Activated CD4-positive, alpha-beta memory T cell treated with anti-CD3 and anti-CD28 coated beads, Interleukin-2, amount 10 ng/mL, durations not matched to agents 7 days and 5 days (primary cell): ENCODE measurements at regions of chr1 and their contacts with region 1.

Region 1: GRCh38 chr1:9004700-9005394 is 21.4 kb downstream of the SLC2A7 start:
- DNase-seq: peak; percentile 87
- H3K4me3 Mint-ChIP-seq: no peak overlapping the region
- H3K27ac Mint-ChIP-seq: no peak overlapping the region
- H3K4me1 Mint-ChIP-seq: peaks cover 10% of the 10 kb centered on the region
- H3K27me3 Mint-ChIP-seq: peaks cover 2% of the 10 kb centered on the region

Region 2: GRCh38 chr1:8742022-8742924 is 262.6 kb before region 1 on chr1:
- CTCF ChIA-PET with region 1: no interaction called
- POLR2A ChIA-PET with region 1: no interaction called
- DNase-seq: no peak
- H3K4me3 Mint-ChIP-seq: no peak overlapping the region
- H3K27ac Mint-ChIP-seq: no peak overlapping the region
- H3K4me1 Mint-ChIP-seq: peaks cover 3% of the 10 kb centered on the region
- H3K27me3 Mint-ChIP-seq: no peaks in the 10 kb centered on the region

Region 3: DNA sequence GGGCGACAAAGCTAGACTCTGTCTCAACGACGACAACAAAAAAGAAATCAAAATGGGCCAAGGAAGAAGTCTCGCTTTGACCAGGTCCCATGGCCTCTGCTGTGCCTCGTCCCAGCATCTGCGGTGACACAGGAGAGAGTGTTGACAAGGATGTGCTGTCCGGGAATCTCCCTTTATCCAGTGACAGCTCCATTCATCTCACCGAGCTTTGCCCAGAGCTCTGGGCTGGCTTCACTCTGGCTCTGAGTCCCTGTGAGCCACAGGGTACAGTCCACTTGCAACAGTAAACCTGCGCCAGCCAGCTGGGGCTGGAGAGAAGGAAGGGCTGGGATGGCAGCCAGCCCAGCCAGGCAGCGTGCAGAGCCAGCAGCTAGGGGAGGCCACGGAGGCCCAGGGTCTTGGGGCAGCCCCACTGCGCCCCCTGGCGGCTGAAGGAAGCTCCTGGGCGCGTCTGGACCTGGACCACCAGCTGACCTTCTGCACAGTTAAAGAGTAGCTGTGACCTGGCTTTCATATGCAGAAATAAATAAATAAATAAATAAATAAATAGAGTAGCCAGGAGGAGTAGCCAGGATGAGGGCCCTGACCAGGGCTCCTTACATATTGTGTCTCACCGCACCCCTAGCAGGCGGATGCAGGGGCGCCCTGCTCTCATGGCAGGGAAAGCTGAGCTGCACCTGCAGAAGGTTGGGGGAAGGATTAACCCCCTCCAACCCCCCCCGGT is 156.0 kb before region 1 on chr1:
- CTCF ChIA-PET with region 1: interaction called, 12 read pairs
- POLR2A ChIA-PET with region 1: interaction called, 3 read pairs
- DNase-seq: peak; percentile 75
- H3K4me3 Mint-ChIP-seq: no peak overlapping the region
- H3K27ac Mint-ChIP-seq: no peak overlapping the region
- H3K4me1 Mint-ChIP-seq: peaks cover 5% of the 10 kb centered on the region
- H3K27me3 Mint-ChIP-seq: peaks cover 6% of the 10 kb centered on the region

Region 4: DNA sequence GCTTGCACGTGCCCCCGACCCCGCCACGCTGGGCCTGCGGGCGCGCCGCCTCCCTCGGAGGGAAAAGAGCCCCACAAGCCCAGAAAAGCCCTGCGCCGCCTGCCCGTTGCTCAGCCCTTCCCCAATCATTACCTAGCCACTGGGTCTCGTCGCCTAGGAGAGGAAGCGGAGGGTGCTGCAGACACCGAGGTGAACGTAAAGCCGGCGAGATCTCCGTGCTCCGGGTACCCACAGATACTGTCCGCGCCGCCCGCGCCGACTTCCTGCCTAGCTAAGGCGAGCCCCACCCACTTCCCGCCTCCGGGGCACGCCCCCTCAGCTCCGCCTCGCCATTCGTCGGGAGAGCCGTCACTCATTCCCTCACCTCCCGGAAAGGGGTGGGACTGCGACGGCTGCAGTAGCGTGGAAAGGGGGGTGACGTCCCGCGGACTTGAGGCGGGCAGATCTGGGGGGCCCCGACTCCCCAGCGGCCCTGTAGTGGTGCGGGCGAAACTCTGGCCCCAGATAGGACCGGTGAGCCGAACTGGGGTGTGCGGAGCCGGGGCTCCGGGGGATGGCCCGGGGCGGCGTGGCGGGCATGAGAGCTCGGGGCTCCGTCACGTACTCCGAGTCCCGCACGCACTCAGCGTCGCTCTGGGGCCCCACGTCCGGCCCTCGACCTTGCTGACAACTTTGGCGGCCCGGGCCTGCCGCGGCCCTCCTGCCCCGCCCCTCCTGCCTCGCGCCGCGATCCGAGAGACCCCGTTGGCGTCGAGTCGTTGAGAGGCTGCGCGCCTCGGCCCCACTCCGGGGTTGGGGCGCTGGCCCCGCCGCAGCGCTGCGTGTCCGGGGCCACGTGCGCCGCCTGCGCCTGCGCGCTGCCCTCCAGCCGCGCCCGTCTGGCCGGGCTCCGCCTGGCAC is 126.1 kb before region 1 on chr1 and contains the start of gene ENO1:
- CTCF ChIA-PET with region 1: interaction called, 27 read pairs
- POLR2A ChIA-PET with region 1: interaction called, 18 read pairs
- DNase-seq: peak; percentile 99
- H3K4me3 Mint-ChIP-seq: peak within 1 kb of the TSS; percentile 99
- H3K27ac Mint-ChIP-seq: peak within 1 kb of the TSS; percentile 99
- H3K4me1 Mint-ChIP-seq: peaks cover 44% of the 10 kb centered on the region
- H3K27me3 Mint-ChIP-seq: no peaks in the 10 kb centered on the region
- total RNA-seq, gene ENO1: 2,453 to 2,472 TPM

Region 5: GRCh38 chr1:8941906-8942305 is 62.9 kb before region 1 on chr1:
- CTCF ChIA-PET with region 1: interaction called, 20 read pairs
- POLR2A ChIA-PET with region 1: no interaction called
- DNase-seq: no peak
- H3K4me3 Mint-ChIP-seq: no peak overlapping the region
- H3K27ac Mint-ChIP-seq: peak overlapping the region; percentile 34
- H3K4me1 Mint-ChIP-seq: peaks cover 88% of the 10 kb centered on the region
- H3K27me3 Mint-ChIP-seq: no peaks in the 10 kb centered on the region

Region 6: DNA sequence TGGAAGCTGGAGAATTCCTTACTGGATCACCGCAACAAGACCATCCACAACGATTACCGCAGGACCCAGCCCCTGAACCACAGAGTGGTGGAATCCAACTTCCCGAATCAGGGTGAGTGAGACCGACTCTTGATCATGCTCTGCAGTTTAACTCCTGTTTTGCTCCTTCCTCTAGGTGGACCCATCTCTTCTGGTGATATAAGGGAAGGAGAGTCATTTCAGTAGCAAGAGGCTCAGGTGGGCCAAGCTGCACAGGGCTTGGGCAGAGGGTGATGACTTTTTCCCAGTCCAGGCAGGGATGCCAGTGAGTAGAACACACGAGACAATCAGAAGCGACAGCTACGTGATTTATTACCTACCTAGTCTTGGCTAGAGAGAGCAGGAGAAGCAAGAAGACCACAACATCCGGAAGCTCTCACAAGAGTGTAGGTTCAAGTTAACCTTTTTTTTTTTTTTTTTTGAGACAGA is 33.9 kb before region 1 on chr1:
- CTCF ChIA-PET with region 1: interaction called, 21 read pairs
- POLR2A ChIA-PET with region 1: interaction called, 3 read pairs
- DNase-seq: peak; percentile 57
- H3K4me3 Mint-ChIP-seq: peak overlapping the region; percentile 98
- H3K27ac Mint-ChIP-seq: peak overlapping the region; percentile 99
- H3K4me1 Mint-ChIP-seq: peaks cover 56% of the 10 kb centered on the region
- H3K27me3 Mint-ChIP-seq: no peaks in the 10 kb centered on the region

Region 7: GRCh38 chr1:9037476-9038337 is 32.9 kb after region 1 on chr1:
- CTCF ChIA-PET with region 1: no interaction called
- POLR2A ChIA-PET with region 1: no interaction called
- DNase-seq: no peak
- H3K4me3 Mint-ChIP-seq: no peak overlapping the region
- H3K27ac Mint-ChIP-seq: no peak overlapping the region
- H3K4me1 Mint-ChIP-seq: no peaks in the 10 kb centered on the region
- H3K27me3 Mint-ChIP-seq: peaks cover 11% of the 10 kb centered on the region

Region 8: GRCh38 chr1:9101510-9102146 is 96.8 kb after region 1 on chr1:
- CTCF ChIA-PET with region 1: interaction called, 15 read pairs
- POLR2A ChIA-PET with region 1: interaction called, 3 read pairs
- DNase-seq: peak; percentile 52
- H3K4me3 Mint-ChIP-seq: no peak overlapping the region
- H3K27ac Mint-ChIP-seq: no peak overlapping the region
- H3K4me1 Mint-ChIP-seq: peaks cover 6% of the 10 kb centered on the region
- H3K27me3 Mint-ChIP-seq: no peaks in the 10 kb centered on the region